ENCODE measurements at regions of chr2 and their contacts with region 1.

Region 1: DNA sequence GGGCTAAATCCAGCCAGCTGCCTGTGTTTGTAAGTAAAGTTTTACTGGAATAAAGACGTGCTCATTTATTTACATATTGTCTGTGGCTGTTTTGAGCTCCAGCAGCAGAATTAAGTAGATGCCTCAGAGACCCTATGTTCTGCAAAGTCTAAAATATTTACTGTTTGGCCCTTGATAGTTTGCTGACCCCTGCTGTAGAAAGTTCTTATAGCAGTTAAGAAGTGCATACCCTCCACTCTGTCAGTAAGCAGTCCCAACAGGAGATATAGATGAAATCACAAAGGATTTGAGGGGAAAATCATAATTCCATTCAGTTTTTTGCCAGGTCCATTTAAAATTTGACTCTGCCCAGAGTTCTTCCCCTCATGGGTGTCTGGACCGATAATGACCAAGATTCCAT is 50.1 kb upstream of the ITM2C start:
- DNase-seq: peak; percentile 47
- ATAC-seq: peak; percentile 76
- H3K4me3 ChIP-seq: no peak overlapping the region
- H3K27ac ChIP-seq: no peak overlapping the region
- H3K4me1 ChIP-seq: peaks cover 6% of the 10 kb centered on the region
- H3K27me3 ChIP-seq: no peaks in the 10 kb centered on the region
- CTCF ChIP-seq: peak; percentile 54
- POLR2A ChIP-seq: no peak
- RAD21 ChIP-seq: peak; percentile 65

Region 2: DNA sequence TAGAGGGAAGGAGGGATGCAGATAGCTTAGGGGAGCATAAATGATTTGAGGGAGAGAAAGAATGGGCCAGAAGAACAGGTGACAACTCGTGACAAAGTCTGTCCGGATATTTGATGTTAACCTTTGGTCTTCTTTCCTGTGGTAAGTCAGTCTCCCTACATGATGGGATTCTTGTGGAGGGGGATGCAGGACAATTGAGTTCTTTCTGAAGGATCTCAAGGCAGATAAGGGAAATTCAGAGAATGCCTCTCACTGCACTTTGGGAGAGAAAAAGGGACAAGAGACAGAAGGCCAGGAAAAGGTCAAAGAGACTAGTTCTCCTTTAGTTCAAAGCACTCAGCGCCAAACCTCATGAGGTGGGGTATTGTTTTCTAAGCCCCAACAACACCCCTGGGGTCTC is 858.1 kb before region 1 on chr2:
- CTCF ChIA-PET with region 1: interaction called, 11 read pairs
- POLR2A ChIA-PET with region 1: no interaction called
- dilution Hi-C with region 1: no loop called
- in situ Hi-C with region 1: no loop called
- intact Hi-C with region 1: no loop called
- DNase-seq: no peak
- ATAC-seq: no peak
- H3K4me3 ChIP-seq: no peak overlapping the region
- H3K27ac ChIP-seq: no peak overlapping the region
- H3K4me1 ChIP-seq: peaks cover 3% of the 10 kb centered on the region; the same call in 1 of the 2 replicates
- H3K27me3 ChIP-seq: no peaks in the 10 kb centered on the region
- CTCF ChIP-seq: no peak
- POLR2A ChIP-seq: no peak
- RAD21 ChIP-seq: no peak

Region 3: DNA sequence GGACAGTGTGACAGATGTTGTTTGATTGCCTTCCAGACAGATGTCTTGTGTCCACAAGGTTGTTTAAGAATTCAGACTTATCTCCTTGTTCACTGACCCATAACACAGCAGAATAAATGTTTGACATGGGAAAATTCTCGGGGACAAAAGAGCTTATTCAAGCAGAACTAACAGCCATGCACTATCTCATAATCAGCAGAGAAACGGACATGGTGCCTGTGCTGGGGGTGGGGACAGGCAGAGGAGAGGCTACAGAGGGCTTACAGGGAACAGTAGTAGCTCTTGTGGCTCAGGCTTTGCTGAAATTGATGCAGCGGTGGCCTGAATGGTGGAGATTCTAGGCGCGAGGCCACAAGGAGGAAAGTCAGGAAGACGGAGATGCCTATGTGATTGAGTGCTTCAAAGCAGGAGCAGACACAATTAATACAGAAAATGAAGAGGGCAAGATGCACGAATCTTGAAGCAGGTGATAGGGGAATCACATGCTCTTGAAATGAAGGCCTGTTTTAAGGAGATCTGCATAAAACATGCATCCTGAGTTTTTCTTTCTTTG is 164.0 kb before region 1 on chr2:
- CTCF ChIA-PET with region 1: no interaction called
- POLR2A ChIA-PET with region 1: no interaction called
- dilution Hi-C with region 1: no loop called
- in situ Hi-C with region 1: no loop called
- intact Hi-C with region 1: no loop called
- DNase-seq: no peak
- ATAC-seq: no peak
- H3K4me3 ChIP-seq: no peak overlapping the region
- H3K27ac ChIP-seq: no peak overlapping the region
- H3K4me1 ChIP-seq: no peaks in the 10 kb centered on the region
- H3K27me3 ChIP-seq: no peaks in the 10 kb centered on the region
- CTCF ChIP-seq: no peak
- POLR2A ChIP-seq: no peak
- RAD21 ChIP-seq: no peak